Naive thymus-derived CD8-positive, alpha-beta T cell (primary cell): ENCODE measurements at regions of chr3 and their contacts with region 1.

Region 1: GRCh38 chr3:38421679-38422336 is 31.9 kb upstream of the ACVR2B start:
- DNase-seq: no peak
- ATAC-seq: no peak
- H3K4me3 Mint-ChIP-seq: peak overlapping the region in 6 of 10 donors; percentile 20 to 85 (median 74)
- H3K27ac Mint-ChIP-seq: peak overlapping the region in 6 of 10 donors; percentile 61 to 93 (median 84)
- H3K4me1 Mint-ChIP-seq: peaks cover 17 to 55% (median 28%) of the 10 kb centered on the region in 4 donors
- H3K27me3 Mint-ChIP-seq: no peaks in the 10 kb centered on the region

Region 2: DNA sequence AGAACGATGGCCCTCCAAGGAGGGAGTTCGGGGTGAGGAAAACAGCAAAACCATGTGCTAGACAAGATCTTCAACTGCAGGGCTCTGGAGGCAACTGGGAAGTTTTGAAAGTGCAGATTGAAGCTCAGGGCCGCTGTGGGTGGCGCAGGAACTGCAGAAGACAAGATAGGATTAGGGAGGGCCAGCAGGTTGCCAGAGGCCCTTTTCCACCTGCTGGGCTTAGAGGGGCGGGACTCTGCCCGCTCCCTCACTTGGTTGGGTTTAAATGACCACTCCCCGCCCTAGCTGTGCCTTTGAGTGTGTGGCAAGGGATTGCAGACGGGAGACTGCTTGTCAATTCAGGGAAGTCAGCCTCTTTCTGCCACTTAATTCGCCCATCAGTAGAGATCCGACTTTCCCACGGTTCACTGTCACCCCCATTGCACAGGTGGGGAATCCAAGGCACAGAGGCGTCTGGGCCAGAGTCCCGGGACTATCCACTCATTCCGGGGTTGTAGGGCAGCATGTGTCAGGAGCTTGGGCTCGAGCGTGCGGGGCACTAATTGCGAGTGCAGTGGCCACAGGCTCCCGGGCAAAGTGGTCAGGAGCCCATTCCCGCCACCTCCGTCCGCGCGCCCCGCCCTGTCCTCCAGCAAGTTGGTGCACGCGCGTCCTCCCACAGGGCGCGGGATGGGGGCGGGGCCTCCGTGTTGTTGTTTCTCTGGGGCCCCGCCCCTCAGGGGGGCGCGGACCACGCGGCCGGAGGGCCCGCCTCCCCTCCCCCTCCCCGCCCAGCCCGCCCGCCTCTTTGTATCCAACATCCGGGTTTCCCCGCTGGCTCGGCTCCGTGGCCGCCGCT is 31.5 kb after region 1 on chr3 and contains the start of gene ACVR2B:
- POLR2A ChIA-PET with region 1: interaction called, 12 read pairs
- DNase-seq: peak; percentile 43 to 85 (median 58)
- ATAC-seq: peak; percentile 44 to 52
- H3K4me3 Mint-ChIP-seq: peak within 1 kb of the TSS; percentile 92 to 99 (median 96)
- H3K27ac Mint-ChIP-seq: peak within 1 kb of the TSS; percentile 78 to 95 (median 93)
- H3K4me1 Mint-ChIP-seq: peaks cover 9 to 33% (median 25%) of the 10 kb centered on the region in 4 donors
- H3K27me3 Mint-ChIP-seq: peaks cover 0 to 4% (median 0%) of the 10 kb centered on the region in 5 donors
- polyA plus RNA-seq, gene ACVR2B: 0.69 to 1.9 (median 1.2) TPM

Region 3: DNA sequence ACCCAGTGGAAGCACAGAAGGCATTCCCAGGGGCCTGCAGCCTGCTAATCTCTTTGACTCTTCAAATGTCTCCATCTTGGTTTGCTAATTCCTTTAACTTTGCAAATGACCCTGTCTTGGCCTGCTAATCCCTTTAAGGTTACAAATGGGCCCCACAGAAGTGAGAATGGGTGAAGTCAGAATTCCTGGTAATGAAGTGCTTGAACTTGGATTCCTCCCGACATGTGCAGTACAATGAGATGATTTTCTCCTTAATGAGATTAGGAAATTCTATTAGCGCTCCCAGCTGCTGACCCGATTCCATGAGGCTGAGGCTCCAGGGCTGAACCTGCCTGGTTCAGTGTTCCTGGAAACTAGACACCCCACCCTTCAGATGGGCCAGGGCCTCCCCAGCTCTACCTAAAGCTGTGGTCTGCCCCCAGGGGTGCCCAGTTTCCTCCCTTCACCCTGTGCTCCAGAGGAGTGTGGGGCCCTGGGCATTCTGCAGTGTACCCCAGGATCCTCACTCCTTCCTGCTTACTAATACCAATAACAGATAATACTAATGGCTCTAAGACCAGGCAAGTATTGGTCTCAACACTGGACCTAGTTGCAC is 180.2 kb after region 1 on chr3:
- POLR2A ChIA-PET with region 1: no interaction called
- DNase-seq: peak in 1 of 10 donors; percentile 22
- ATAC-seq: no peak
- H3K4me3 Mint-ChIP-seq: no peak overlapping the region
- H3K27ac Mint-ChIP-seq: no peak overlapping the region
- H3K4me1 Mint-ChIP-seq: peaks cover 0 to 1% (median 0%) of the 10 kb centered on the region in 4 donors
- H3K27me3 Mint-ChIP-seq: peaks cover 9 to 19% (median 17%) of the 10 kb centered on the region in 5 donors

Region 4: DNA sequence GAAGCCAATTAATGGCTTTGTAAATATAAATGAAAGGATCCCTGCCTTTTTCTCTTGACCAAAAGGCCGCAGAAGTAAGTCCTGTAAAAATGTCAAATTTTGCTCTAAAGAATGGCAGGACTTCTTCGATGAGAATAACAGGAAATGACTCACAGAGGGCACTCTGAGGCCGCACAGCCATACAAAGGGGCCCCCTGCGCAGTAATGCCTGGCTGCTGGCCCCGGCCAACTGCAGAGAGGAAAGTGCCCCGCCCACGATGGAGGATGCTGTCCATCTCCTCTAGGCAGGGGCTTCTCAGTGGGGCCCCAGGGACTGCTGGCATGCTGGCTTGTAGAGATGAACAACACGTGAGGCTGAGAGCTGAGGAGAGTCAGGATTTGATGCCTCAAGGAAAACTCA is 412.3 kb after region 1 on chr3:
- POLR2A ChIA-PET with region 1: no interaction called
- DNase-seq: peak in 1 of 10 donors; percentile 14
- ATAC-seq: peak; percentile 44 to 60
- H3K4me3 Mint-ChIP-seq: peak overlapping the region in 1 of 10 donors; percentile 23
- H3K27ac Mint-ChIP-seq: peak overlapping the region in 5 of 10 donors; percentile 23 to 77 (median 56)
- H3K4me1 Mint-ChIP-seq: peaks cover 4 to 15% (median 10%) of the 10 kb centered on the region in 4 donors
- H3K27me3 Mint-ChIP-seq: no peaks in the 10 kb centered on the region